MCF 10A (cell line): ENCODE measurements at regions of chr19 and their contacts with region 1.

Region 1: DNA sequence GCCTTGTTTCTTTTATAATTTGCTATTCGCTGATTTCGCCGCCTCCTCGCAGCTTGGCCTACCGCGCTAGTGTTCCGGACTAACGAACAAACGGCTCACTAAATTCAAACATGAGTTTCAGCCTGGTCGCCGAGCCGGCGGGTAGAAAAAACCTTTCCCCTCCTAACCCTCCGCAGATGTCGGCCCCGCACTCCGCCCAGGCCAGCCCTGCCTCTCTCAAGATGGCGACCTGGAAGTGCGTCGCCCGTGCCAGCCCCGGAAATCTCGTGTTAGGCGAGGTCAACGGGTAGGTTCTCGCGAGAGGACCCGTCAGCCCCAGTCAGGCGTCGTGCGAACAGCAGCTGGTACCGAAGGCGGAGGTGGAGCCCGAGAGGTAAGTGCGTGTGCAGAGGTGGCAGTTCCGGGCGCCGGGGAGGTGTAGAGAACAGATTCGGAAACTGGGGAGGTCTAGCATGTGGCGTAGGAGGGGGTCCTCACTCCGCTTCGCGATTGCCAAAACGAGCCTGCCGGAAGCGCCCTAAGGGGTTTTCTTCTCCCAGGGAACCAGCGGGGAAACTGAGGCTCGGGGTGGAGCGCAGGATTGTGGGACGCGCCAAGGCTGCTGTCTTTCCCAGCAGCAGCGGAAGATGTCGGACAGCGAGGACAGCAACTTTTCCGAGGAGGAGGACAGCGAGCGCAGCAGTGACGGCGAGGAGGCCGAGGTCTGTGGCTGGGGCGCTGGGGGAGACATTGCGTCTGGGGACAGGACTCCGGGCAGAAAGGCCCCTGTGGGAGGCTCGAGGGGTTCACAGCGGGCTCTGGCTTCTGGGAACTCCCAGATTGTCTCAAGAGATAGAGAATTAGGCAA is at the start of gene SUPT5H:
- DNase-seq: peak; percentile 99
- H3K4me3 Mint-ChIP-seq: peak within 1 kb of the TSS; percentile 93
- H3K27ac Mint-ChIP-seq: peak within 1 kb of the TSS; percentile 99
- H3K4me1 Mint-ChIP-seq: peaks cover 29% of the 10 kb centered on the region
- H3K27me3 Mint-ChIP-seq: no peaks in the 10 kb centered on the region
- CTCF ChIP-seq: no peak
- total RNA-seq, gene SUPT5H: 122 and 165 TPM in 2 replicates

Region 2: DNA sequence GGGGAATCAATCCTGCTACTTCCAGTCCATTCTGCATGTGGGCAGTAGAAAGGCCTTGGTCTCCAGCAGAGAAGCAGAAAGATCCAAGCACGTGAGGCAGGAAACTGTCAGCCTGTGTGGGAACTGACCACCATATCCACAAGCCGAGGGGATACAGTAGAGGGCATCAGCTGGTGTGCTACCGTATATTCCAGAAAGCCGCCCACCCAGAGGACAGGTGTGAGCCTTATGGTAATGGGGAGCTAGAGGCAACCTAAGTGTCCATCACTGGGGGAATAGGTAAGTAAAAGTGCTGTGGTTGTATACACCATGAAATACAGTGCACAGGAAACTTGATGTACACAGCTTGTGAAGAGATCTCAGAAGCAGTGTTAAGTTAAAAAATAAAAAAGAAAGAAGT is 152.1 kb before region 1 on chr19:
- CTCF ChIA-PET with region 1: no interaction called
- POLR2A ChIA-PET with region 1: no interaction called
- intact Hi-C with region 1: no loop called
- DNase-seq: no peak
- H3K4me3 Mint-ChIP-seq: no peak overlapping the region
- H3K27ac Mint-ChIP-seq: no peak overlapping the region
- H3K4me1 Mint-ChIP-seq: no peaks in the 10 kb centered on the region
- H3K27me3 Mint-ChIP-seq: peaks cover 73% of the 10 kb centered on the region
- CTCF ChIP-seq: no peak

Region 3: GRCh38 chr19:39372047-39372802 is 73.3 kb before region 1 on chr19:
- CTCF ChIA-PET with region 1: no interaction called
- POLR2A ChIA-PET with region 1: no interaction called
- intact Hi-C with region 1: no loop called
- DNase-seq: peak; percentile 47
- H3K4me3 Mint-ChIP-seq: no peak overlapping the region
- H3K27ac Mint-ChIP-seq: no peak overlapping the region
- H3K4me1 Mint-ChIP-seq: no peaks in the 10 kb centered on the region
- H3K27me3 Mint-ChIP-seq: no peaks in the 10 kb centered on the region
- CTCF ChIP-seq: no peak

Region 4: DNA sequence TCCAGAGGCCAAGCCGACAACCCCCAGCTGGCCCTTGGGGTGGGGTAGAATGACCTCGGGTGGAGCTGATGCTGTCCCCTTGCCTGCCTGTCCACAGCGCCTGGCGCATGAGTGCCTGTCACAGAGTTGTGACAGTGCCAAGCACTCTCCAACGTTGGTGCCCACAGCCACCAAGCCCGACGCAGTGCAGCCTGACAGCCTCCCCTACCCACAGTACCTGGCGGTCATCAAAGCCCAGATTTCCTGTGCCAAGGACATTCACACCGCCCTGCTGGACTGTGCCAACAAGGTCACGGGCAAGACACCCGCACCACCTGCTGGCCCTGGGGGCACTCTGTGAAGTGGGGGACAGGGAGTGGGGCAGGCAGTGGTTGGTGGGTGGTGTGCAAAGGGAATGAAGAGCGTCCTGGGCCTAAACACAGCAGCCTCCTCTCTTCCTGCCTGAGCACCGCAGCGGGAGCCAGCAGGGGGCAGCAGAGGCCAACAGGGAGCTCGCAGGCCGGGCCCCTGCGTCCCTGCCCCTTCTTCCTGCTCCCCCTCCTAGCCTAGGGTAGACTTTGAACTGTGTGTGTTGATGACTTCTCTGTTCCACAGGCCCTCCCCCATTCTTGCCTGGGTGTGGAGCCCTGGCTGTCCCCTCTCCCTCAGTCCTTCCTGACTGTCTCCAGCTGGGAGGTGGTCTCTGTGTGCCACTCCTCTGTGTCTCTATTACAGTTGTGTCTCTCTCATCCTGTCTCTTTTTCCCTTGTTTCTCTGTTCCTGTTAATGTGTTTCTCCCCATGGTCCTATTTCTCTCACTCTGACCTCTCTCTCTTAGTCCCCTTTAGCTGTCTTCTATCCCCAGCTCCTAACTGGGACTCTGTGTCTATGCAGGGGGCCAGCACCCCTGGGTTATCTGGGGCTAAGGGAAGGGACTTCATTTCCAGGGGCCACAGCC is 47.9 kb before region 1 on chr19:
- CTCF ChIA-PET with region 1: interaction called, 9 read pairs
- POLR2A ChIA-PET with region 1: interaction called, 21 read pairs
- intact Hi-C with region 1: no loop called
- DNase-seq: peak; percentile 92
- H3K4me3 Mint-ChIP-seq: peak overlapping the region; percentile 10
- H3K27ac Mint-ChIP-seq: peak overlapping the region; percentile 92
- H3K4me1 Mint-ChIP-seq: peaks cover 40% of the 10 kb centered on the region
- H3K27me3 Mint-ChIP-seq: no peaks in the 10 kb centered on the region
- CTCF ChIP-seq: peak; percentile 98

Region 5: GRCh38 chr19:39474139-39474622 is 28.7 kb after region 1 on chr19:
- CTCF ChIA-PET with region 1: interaction called, 15 read pairs
- POLR2A ChIA-PET with region 1: interaction called, 4 read pairs
- intact Hi-C with region 1: no loop called
- DNase-seq: peak; percentile 46
- H3K4me3 Mint-ChIP-seq: no peak overlapping the region
- H3K27ac Mint-ChIP-seq: no peak overlapping the region
- H3K4me1 Mint-ChIP-seq: no peaks in the 10 kb centered on the region
- H3K27me3 Mint-ChIP-seq: no peaks in the 10 kb centered on the region
- CTCF ChIP-seq: peak; percentile 86

Region 6: DNA sequence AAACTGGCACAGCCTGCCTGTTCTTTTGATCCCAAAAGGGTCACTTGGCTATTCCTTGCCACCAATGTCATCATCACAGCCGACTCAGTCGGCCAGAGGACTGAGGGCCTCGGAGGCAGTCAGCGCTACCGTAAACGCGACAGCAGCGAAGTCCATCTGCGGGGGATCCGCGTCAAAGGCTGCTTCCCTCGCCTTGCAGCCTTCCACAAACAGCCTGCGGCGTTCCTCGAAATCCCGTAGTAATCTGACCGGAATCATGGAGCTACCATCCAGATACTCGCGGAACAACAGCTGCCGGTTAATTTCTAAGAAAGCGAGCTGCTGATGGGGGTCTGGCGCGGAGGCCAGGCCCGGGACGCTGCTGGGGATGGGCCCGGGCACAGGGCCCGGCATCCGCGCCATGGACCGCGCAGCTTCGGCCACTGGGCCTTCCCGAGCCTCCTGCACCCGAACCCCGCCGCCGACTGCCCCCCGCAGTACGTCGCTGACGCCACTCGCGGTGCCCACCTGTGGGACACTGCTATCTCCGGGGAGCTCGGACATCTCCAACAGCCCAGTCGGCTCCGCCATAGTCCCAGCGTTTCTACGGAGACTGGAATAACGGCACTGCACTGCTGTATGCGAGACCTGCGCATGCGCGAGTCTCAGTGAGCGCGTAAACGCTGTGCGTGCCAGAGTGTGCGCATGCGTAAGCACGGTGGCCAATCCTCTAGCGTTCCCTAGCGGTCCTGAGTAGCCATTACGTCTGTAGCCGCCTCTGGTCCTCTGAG is 86.9 kb after region 1 on chr19 and contains the start of gene EID2B:
- CTCF ChIA-PET with region 1: interaction called, 51 read pairs
- POLR2A ChIA-PET with region 1: interaction called, 21 read pairs
- intact Hi-C with region 1: loop called (anchors 1 kb)
- DNase-seq: peak; percentile 97
- H3K4me3 Mint-ChIP-seq: peak within 1 kb of the TSS; percentile 81
- H3K27ac Mint-ChIP-seq: peak within 1 kb of the TSS; percentile 79
- H3K4me1 Mint-ChIP-seq: peaks cover 5% of the 10 kb centered on the region
- H3K27me3 Mint-ChIP-seq: no peaks in the 10 kb centered on the region
- CTCF ChIP-seq: peak; percentile 98
- total RNA-seq, gene EID2B: 2.0 and 3.3 TPM in 2 replicates

Region 7: GRCh38 chr19:39671738-39672363 is 226.4 kb after region 1 on chr19:
- CTCF ChIA-PET with region 1: interaction called, 16 read pairs
- POLR2A ChIA-PET with region 1: interaction called, 3 read pairs
- intact Hi-C with region 1: loop called (anchors 1 kb)
- DNase-seq: peak; percentile 66
- H3K4me3 Mint-ChIP-seq: no peak overlapping the region
- H3K27ac Mint-ChIP-seq: no peak overlapping the region
- H3K4me1 Mint-ChIP-seq: peaks cover 6% of the 10 kb centered on the region
- H3K27me3 Mint-ChIP-seq: peaks cover 45% of the 10 kb centered on the region
- CTCF ChIP-seq: peak; percentile 43